IMR-90 (cell line): ENCODE measurements at regions of chr9 and their contacts with region 1.

Region 1: GRCh38 chr9:21559424-21560280 is 77.5 kb upstream of the IFNE start:
- DNase-seq: peak; percentile 55
- ATAC-seq: peak; percentile 91
- H3K4me3 ChIP-seq: peak overlapping the region; percentile 98
- H3K27ac ChIP-seq: peak overlapping the region; percentile 94
- H3K4me1 ChIP-seq: peaks cover 9% of the 10 kb centered on the region
- H3K27me3 ChIP-seq: no peaks in the 10 kb centered on the region
- CTCF ChIP-seq: no peak
- POLR2A ChIP-seq: no peak; the same call in 1 of the 2 replicates
- RAD21 ChIP-seq: peak; percentile 31

Region 2: DNA sequence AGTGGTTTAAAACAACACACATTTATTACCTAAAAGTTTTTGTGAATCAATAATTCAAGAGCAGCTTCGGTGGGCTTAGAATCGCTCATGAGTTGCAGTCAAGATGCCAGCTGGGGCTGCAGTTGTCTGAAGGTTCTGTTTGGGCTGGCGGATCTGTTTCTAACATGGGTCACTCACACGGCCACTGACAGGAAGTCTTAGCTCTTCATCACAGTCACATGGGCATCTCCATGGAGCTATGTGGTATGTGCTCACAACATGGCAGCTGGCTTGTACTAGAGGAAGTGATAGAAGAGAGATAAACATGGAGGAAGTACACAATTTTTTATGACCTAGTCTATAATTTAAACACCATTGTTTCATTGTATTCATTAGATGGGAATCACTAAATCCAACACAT is 235.6 kb before region 1 on chr9:
- CTCF ChIA-PET with region 1: no interaction called
- POLR2A ChIA-PET with region 1: no interaction called
- dilution Hi-C with region 1: no loop called
- in situ Hi-C with region 1: no loop called
- intact Hi-C with region 1: no loop called
- DNase-seq: no peak
- ATAC-seq: no peak
- H3K4me3 ChIP-seq: no peak overlapping the region
- H3K27ac ChIP-seq: no peak overlapping the region
- H3K4me1 ChIP-seq: no peaks in the 10 kb centered on the region
- H3K27me3 ChIP-seq: no peaks in the 10 kb centered on the region
- CTCF ChIP-seq: no peak
- POLR2A ChIP-seq: no peak
- RAD21 ChIP-seq: no peak

Region 3: DNA sequence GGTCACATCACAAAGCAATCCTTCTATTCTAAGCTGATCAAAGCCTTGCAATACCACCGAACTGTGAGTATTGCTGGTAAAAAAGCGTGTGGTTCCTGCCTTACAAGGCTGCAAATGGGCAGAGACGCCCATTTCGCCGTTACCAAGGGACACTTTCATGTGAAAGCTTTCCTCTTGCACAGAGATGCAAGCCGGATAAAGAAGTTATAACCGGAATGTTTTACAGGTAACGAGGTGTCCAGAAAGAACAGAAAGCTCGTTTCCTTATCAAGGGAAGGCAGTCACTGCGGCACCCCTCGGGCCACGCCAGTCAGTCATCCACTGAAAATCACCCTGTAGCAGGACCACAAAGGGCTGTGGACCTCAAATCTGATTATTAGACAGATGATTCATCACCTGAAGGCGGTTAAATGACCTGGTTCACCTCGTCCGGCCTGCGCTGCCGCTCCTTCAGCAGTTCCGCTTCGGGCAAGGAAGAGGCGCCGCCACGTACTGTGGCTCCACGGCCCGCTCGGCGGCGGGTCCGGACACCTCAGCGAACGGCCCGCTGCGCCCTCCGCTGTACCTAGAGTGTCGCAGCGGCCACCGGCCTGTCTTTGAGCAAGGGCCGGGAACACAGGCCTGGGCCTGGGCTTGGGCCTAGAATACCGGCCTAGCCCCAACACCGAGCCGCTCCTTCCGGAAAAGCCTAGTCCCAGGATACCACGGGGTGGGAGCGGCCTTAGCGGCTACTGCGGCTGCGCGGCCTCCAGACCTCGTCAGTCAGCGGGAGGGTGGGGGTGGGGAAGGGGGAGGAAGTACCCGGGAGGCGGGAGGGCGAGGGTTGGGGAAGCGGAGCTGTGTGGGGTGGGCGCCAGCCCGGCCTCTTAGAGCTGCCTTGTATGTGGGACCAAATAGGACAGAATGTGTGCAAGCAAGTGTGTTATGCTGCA is 224.7 kb before region 1 on chr9 and contains the start of gene KLHL9:
- CTCF ChIA-PET with region 1: no interaction called
- POLR2A ChIA-PET with region 1: no interaction called
- dilution Hi-C with region 1: no loop called
- in situ Hi-C with region 1: no loop called
- intact Hi-C with region 1: loop called (anchors 10 kb)
- DNase-seq: peak; percentile 88
- ATAC-seq: peak; percentile 98
- H3K4me3 ChIP-seq: peak within 1 kb of the TSS; percentile 94
- H3K27ac ChIP-seq: peak within 1 kb of the TSS; percentile 96
- H3K4me1 ChIP-seq: peaks cover 7% of the 10 kb centered on the region
- H3K27me3 ChIP-seq: peaks cover 4% of the 10 kb centered on the region; the same call in 1 of the 2 replicates
- CTCF ChIP-seq: no peak
- POLR2A ChIP-seq: peak; percentile 79; the same call in 1 of the 2 replicates
- RAD21 ChIP-seq: no peak
- total RNA-seq, gene KLHL9: 46.4 and 68.6 TPM in 2 replicates

Region 4: GRCh38 chr9:21506626-21507484 is 52.8 kb before region 1 on chr9:
- CTCF ChIA-PET with region 1: no interaction called
- POLR2A ChIA-PET with region 1: no interaction called
- dilution Hi-C with region 1: no loop called
- in situ Hi-C with region 1: no loop called
- intact Hi-C with region 1: loop called (anchors 10 kb)
- DNase-seq: peak; percentile 91
- ATAC-seq: peak; percentile 59
- H3K4me3 ChIP-seq: no peak overlapping the region
- H3K27ac ChIP-seq: 0 out of 2 replicates have a peak overlapping the region, but pooled peaks have one; percentile 12
- H3K4me1 ChIP-seq: peaks cover 8% of the 10 kb centered on the region; the same call in 1 of the 2 replicates
- H3K27me3 ChIP-seq: no peaks in the 10 kb centered on the region
- CTCF ChIP-seq: no peak
- POLR2A ChIP-seq: no peak
- RAD21 ChIP-seq: no peak

Region 5: DNA sequence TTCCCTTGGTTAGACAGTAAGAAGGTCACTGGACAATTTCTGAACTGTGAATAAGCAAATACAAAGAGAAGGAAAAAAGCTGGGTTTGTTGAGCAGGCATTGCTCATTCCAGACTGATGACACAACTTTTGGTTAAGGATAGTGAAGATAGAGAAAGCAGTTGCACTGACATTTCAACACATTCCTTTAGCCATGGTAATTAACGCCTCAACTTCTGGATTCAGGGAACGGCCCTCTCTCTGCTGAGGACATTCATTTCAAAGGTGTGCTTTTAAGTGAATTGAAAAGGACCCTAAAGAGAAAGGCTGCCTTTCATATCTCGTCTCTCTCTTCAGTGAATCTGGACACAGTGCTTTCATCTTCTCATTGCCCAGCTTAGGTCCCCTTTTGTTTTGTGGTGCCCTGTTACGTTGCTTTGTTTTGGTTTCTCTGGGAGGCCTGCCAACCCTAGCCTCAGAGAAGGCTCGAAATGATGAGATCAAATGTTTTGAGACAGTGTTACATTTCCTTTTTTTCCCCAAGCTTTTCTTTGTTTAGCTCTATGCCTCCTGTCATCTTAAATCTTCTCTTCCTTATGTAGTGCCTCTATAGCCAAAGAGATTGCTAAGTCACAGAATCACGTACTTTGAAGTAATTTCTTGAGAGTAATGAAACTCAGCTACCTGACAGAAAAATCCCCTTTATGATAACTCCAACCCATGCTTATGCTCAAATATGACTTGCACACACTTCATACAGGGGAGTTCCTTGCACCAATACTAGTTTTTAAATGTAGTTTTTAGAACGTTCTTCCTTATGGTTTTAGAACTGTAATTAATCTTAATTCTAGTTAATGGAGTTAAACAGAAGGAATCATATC is 16.9 kb after region 1 on chr9:
- CTCF ChIA-PET with region 1: no interaction called
- POLR2A ChIA-PET with region 1: no interaction called
- dilution Hi-C with region 1: no loop called
- in situ Hi-C with region 1: no loop called
- intact Hi-C with region 1: loop called (anchors 2 kb)
- DNase-seq: peak; percentile 87
- ATAC-seq: peak; percentile 83
- H3K4me3 ChIP-seq: peak overlapping the region; percentile 36; the same call in 1 of the 2 replicates
- H3K27ac ChIP-seq: peak overlapping the region; percentile 94
- H3K4me1 ChIP-seq: peaks cover 7% of the 10 kb centered on the region
- H3K27me3 ChIP-seq: no peaks in the 10 kb centered on the region
- CTCF ChIP-seq: no peak
- POLR2A ChIP-seq: no peak
- RAD21 ChIP-seq: no peak

Region 6: DNA sequence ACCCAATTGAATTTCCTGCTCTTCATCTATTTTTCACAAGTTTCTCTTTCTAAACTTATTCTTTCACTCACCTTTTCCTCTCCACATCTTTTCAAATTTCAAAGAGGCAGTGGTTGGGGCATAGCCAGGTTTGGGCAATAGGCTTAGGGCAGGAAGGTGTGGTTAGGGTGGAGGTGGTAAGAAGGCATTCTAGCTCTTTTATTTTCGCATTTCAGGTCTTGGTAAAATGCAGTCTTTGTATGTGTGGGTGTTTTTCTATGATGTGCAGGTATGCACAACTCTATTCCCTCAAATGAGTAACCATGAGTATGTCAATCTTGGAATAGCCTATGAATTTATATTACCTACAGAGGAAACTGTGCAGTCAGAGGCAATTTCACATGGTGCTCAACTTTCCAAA is 52.2 kb after region 1 on chr9:
- CTCF ChIA-PET with region 1: no interaction called
- POLR2A ChIA-PET with region 1: no interaction called
- dilution Hi-C with region 1: no loop called
- in situ Hi-C with region 1: no loop called
- intact Hi-C with region 1: no loop called
- DNase-seq: no peak
- ATAC-seq: no peak
- H3K4me3 ChIP-seq: no peak overlapping the region
- H3K27ac ChIP-seq: no peak overlapping the region
- H3K4me1 ChIP-seq: peaks cover 7% of the 10 kb centered on the region
- H3K27me3 ChIP-seq: no peaks in the 10 kb centered on the region
- CTCF ChIP-seq: no peak
- POLR2A ChIP-seq: no peak
- RAD21 ChIP-seq: no peak

Region 7: DNA sequence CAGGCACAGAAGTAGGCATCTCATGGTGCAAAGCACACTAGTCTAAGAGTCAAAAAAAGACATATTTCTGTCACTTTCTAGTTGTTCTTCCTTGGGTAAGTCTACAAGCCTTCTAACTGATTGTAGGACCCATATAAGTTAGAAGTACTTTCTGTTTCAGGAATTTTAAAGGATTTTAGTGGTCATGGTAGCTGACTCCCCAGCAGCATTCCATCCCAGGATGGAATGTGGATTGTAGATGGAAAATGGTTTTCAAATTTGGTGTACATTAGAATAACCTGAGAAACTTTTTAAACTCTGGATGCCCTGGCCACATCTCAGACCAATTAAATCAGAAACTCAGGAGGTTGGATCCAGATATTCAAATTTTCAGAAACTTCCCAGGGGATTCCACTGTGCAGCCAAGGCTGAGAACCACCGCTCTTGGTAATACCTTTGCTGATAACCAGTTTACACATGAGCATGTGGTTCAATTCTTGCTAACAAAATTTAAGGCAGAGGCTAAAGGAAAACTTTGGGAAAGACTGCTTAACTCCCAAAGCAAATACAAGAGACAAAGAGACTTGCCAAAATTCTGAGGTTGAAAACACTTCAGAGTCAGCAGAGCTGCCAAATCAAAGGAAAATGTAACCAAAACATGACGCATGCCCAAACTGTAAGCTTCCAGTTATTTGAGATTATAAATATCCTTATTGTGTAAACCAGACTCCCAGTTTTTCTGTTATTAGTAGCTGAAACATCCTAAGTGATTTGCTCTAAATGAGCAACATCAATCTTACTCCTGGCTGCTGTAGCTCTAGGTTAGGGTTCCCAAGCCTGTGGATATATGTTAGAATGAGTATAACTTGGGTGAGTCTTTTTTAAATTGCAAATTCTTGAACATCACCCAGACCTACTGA is 97.4 kb after region 1 on chr9:
- CTCF ChIA-PET with region 1: no interaction called
- POLR2A ChIA-PET with region 1: no interaction called
- dilution Hi-C with region 1: no loop called
- in situ Hi-C with region 1: no loop called
- intact Hi-C with region 1: loop called (anchors 2 kb)
- DNase-seq: peak; percentile 87
- ATAC-seq: peak; percentile 77
- H3K4me3 ChIP-seq: peak overlapping the region; percentile 2; the same call in 1 of the 2 replicates
- H3K27ac ChIP-seq: peak overlapping the region; percentile 65; the same call in 1 of the 2 replicates
- H3K4me1 ChIP-seq: peaks cover 8% of the 10 kb centered on the region
- H3K27me3 ChIP-seq: no peaks in the 10 kb centered on the region
- CTCF ChIP-seq: no peak
- POLR2A ChIP-seq: no peak
- RAD21 ChIP-seq: no peak

Region 8: DNA sequence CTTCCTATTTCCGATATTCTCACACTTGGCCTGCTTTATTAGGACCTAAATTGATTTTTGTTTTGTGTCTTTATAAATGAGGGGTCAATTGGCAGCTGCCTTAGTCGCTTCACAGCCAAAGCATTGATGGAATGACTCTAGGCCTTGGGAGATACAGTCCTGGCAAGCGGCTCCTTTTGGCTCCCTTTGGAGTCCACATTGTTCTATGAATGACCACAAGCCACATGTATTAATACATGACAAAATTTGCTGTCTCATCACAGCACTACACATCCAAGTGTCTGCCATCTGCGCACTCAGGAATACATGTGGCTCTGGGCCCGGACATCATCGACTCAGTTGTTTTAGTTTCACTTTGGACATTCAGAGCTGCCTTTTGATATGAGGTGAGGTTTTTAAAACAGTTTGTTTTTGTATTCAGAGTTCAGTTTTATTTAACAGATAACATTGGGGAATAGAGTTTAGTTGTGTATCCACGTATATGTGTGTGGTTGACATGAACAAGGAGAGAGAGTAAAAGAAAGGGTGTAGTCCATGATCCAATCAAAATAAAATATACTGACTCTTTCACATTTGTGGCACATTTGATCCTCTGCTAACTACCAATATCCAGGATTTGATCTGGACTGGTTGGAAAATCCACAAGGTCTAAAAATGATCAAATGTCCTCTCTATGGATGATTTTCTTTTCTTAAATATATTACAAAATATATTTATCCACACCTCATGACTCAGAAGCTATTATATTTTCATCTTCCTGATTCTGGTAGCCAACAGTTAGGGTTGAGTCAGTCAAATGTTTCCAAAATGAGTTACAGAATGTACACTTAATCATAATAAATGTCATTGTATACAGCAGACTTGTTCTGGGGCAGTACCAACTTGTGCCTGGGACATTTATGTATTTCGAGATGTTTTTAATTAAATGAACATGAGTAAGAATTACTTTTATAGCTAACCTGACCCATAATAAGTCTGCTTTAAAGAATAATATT is 128.8 kb after region 1 on chr9:
- CTCF ChIA-PET with region 1: interaction called, 7 read pairs
- POLR2A ChIA-PET with region 1: no interaction called
- dilution Hi-C with region 1: no loop called
- in situ Hi-C with region 1: loop called (anchors 5 kb)
- intact Hi-C with region 1: no loop called
- DNase-seq: peak; percentile 81
- ATAC-seq: peak; percentile 55
- H3K4me3 ChIP-seq: peak overlapping the region; percentile 18
- H3K27ac ChIP-seq: peak overlapping the region; percentile 58
- H3K4me1 ChIP-seq: peaks cover 28% of the 10 kb centered on the region
- H3K27me3 ChIP-seq: no peaks in the 10 kb centered on the region
- CTCF ChIP-seq: no peak
- POLR2A ChIP-seq: no peak
- RAD21 ChIP-seq: no peak